Activated CD8-positive, alpha-beta T cell treated with anti-CD3 and anti-CD28 coated beads for 36 hours (primary cell): ENCODE measurements at regions of chr15 and their contacts with region 1.

Region 1: DNA sequence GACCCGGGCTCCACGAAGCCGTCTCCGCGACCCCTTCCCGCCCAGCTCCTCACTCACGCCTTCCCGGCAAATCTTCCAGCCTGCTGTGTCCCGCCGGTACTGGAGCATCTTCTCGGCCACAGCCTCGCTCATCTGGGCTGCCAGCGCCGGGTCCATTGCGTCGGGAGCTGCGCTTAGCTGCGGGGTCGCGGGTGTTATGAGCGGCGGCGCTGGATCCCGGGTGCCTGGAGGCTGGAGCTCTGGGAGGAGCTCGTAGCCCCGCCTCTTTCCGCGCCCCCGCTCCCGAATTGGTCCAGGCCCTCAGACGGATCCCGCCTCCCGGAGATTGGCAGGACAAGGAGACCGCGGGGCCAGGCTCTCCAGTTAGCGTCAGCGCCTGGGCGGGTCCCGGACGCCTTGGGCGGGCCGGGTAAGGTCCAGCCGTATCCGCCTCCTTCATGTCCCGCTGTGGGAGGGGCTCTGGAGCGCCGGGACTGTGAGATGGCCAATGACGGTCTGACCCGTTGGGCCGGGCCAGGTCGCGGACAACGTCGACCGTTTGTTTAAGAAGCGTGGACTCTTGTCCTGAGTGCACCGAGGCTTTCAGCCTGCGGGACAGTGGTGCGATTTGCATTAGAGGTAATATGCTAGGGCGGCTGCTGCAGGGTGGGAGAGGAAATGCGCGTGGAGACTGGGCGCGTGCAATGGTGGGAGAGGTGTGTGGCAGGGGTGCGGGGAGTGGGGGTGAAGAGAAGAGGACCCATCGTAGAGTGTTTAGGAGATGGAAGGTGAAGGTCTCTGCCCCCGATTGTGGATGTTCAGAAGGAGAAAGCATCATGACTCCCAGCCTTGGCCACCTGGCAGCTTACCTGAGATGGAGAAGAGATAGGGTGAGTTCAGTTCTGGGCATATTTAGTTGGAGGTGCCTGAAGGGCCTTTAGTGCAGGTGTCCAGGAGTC is at the start of gene STARD5:
- DNase-seq: peak; percentile 98
- ATAC-seq: peak; percentile 100
- H3K4me3 Mint-ChIP-seq: peak within 1 kb of the TSS; percentile 84
- H3K27ac Mint-ChIP-seq: peak within 1 kb of the TSS; percentile 86
- H3K4me1 Mint-ChIP-seq: peaks cover 37% of the 10 kb centered on the region
- H3K27me3 Mint-ChIP-seq: no peaks in the 10 kb centered on the region
- CTCF ChIP-seq: no peak
- total RNA-seq, gene STARD5: 6.7 to 6.9 TPM

Region 2: DNA sequence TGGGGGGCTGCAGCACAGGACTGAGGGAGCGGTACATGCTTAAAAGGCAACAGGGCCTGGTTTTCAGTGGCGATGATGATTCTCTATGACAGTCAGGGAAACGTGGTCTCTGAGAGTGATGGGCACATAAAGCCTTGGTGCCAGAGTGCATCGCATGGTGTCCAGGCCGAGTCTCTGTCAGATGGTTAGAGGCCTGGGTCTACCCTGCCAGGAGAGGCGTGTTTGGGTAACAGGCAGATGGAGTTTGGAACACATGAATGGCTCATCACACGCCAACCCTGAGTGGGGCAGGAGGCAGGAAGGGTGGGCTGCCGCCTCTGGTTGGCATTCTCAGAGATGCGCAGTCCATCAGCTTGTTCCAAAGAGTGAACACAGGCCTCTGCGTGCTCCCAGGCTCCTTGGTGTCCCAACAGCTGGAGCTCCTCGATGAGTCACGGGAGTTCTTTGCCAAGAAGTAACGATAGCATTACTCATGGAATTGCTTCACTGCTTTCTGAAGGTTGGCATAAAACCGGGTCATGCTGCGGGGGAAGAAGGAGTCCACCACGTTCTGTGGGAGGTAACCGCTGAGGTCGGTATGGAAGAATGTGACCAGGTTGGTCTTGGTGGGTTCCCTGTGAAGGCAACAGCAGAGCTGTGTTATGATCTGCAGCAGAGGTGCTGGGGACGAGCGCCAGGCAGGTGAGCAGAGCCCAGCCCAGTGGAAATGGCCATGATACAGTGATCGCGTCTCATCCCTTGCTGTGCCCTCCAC is 11.2 kb before region 1 on chr15:
- CTCF ChIA-PET with region 1: interaction called, 4 read pairs
- POLR2A ChIA-PET with region 1: interaction called, 29 read pairs
- intact Hi-C with region 1: no loop called
- DNase-seq: no peak
- ATAC-seq: no peak
- H3K4me3 Mint-ChIP-seq: no peak overlapping the region
- H3K27ac Mint-ChIP-seq: peak overlapping the region; percentile 69
- H3K4me1 Mint-ChIP-seq: peaks cover 72% of the 10 kb centered on the region
- H3K27me3 Mint-ChIP-seq: no peaks in the 10 kb centered on the region
- CTCF ChIP-seq: no peak